ENCODE measurements at regions of chr1 and their contacts with region 1.

Region 1: DNA sequence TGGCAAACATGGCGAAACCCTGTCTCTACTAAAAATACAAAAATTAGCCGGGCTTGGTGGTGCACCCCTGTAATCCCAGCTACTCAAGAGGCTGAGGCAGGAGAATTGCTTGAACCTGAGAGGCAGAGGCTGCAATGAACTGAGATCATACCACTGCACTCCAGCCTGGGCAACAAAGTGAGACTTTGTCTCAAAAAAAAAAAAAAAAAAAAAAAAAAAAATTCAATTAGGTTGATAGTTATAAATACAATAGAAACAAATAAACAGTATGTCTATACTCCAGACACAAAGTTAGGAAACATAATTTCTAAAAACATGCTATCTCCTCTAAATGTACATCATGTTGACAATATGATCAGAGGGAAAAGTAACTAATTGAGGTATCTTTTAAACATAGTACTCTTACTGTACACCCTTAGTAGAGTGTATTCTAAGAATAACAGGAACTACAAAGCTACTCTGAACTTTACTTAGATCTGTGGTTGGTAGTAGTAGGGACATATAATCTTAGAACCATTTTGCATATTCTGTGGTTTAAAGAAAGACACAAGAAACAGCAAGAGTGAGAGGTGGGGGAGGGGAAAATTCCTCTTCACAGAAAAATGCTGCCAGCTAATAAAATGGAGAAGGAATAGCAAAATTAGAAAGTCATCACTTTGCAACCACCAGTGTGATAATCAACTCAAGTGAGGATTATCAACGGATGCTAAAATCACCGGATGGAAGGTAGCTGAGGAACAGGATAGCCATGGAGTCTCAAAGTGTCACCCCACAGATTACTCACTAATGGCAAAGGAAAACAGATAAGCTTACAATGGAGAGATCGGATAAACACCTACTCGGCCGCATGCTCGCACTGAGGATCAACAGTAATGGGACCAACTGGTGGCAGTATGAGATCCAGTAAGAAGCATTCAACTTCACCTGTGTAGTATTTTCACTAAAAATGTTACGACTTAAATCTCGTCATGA is 35.0 kb downstream of the MTOR start:
- ATAC-seq: peak in 1 of 8 experiments; percentile 28
- H3K4me3 ChIP-seq: no peak overlapping the region
- H3K27ac ChIP-seq: no peak overlapping the region
- H3K4me1 ChIP-seq: no peaks in the 10 kb centered on the region

Region 2: GRCh38 chr1:11134251-11134897 is 93.0 kb before region 1 on chr1:
- in situ Hi-C with region 1: loop called in 1 of 9 experiments (anchors 25 kb)
- ATAC-seq: peak in 3 of 8 experiments; percentile 32 to 90 (median 83)
- H3K4me3 ChIP-seq: no peak overlapping the region
- H3K27ac ChIP-seq: no peak overlapping the region
- H3K4me1 ChIP-seq: no peaks in the 10 kb centered on the region